Gastrocnemius medialis (tissue), 4 donors: ENCODE measurements at regions of chr13 and their contacts with region 1.

Region 1: DNA sequence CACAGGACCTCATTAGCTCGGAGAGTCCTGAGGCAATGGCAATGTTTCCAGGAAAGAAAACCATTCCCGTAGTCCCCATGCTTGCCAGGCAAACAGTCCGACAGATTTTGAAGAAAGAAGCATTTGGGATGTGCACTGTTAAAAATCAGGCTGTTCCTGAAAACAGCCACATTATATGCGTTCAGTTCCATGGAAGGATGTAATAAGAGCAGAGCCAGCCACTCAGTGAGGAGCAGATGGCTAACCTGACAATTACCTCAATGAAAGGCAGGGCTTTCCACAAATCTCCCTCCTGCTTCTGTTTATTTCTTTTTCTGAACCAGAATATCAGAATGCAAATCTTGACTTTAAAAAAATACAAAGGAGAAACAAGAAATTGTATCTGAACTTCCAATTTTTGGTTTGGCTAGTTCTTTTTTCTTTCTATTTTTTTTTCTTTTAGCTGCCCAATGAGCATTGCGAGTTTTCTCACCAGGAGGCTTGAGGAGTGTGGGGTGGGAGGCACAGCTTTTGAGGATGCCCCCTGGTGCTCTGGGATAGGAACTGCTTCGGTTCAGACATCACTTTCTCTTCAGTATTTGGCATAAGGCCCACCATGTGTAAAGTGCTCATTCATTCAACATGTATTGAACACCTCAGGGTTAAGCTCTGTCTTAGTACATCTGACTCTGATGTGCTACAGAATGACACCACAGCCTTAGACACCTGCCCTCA is 124.2 kb downstream of the TBC1D4 start:
- DNase-seq: no peak
- ATAC-seq: peak; percentile 31 to 75
- H3K4me3 ChIP-seq: no peak overlapping the region
- H3K27ac ChIP-seq: peak overlapping the region in 3 of 4 donors; percentile 19 to 41 (median 22)
- H3K4me1 ChIP-seq: peaks cover 42 to 58% of the 10 kb centered on the region in 2 donors
- H3K27me3 ChIP-seq: no peaks in the 10 kb centered on the region
- CTCF ChIP-seq: peak in 4 of 5 experiments; percentile 31 to 50 (median 36)
- POLR2A ChIP-seq: no peak

Region 2: DNA sequence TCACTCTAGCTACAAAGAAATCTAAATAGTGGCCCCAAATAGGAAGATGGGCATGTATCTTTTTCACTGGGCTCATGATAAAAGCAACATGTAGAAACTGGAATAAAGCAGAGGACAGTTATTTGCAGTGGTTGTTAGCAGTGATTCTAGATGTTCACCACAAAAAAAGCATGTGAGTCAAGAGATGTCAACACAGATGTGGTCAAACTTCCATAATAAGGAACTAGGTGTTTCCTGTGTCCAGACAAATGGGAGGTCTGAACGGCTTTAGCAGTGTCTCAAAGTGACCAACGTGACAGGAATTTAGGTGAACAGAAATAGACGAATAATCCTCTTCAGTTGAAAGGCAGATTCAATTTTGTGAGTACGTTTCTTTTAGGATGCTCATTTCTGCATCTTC is 38.5 kb before region 1 on chr13:
- in situ Hi-C with region 1: no loop called
- intact Hi-C with region 1: loop called (anchors 5 kb)
- DNase-seq: peak; percentile 29 to 34
- ATAC-seq: peak; percentile 95 to 99
- H3K4me3 ChIP-seq: no peak overlapping the region
- H3K27ac ChIP-seq: peak overlapping the region; percentile 50 to 72 (median 66)
- H3K4me1 ChIP-seq: peaks cover 32 to 39% of the 10 kb centered on the region in 2 donors
- H3K27me3 ChIP-seq: no peaks in the 10 kb centered on the region
- CTCF ChIP-seq: no peak
- POLR2A ChIP-seq: no peak

Region 3: GRCh38 chr13:75788481-75788981 is 430.8 kb after region 1 on chr13:
- in situ Hi-C with region 1: no loop called
- intact Hi-C with region 1: no loop called
- DNase-seq: peak; percentile 75 to 83
- ATAC-seq: peak; percentile 94 to 96
- H3K4me3 ChIP-seq: no peak overlapping the region
- H3K27ac ChIP-seq: peak overlapping the region; percentile 86 to 88 (median 87)
- H3K4me1 ChIP-seq: peaks cover 72 to 85% of the 10 kb centered on the region in 2 donors
- H3K27me3 ChIP-seq: no peaks in the 10 kb centered on the region
- CTCF ChIP-seq: no peak
- POLR2A ChIP-seq: no peak